ENCODE measurements at regions of chr2 and their contacts with region 1.

Region 1: GRCh38 chr2:200540793-200541192 is 14.8 kb downstream of the SGO2 start:
- DNase-seq: no peak
- H3K4me3 Mint-ChIP-seq: no peak overlapping the region
- H3K27ac Mint-ChIP-seq: no peak overlapping the region
- H3K4me1 Mint-ChIP-seq: no peaks in the 10 kb centered on the region
- H3K27me3 Mint-ChIP-seq: no peaks in the 10 kb centered on the region
- CTCF ChIP-seq: no peak

Region 2: GRCh38 chr2:200585730-200586643 is 45.2 kb after region 1 on chr2 and contains the start of gene AOX1:
- CTCF ChIA-PET with region 1: no interaction called
- intact Hi-C with region 1: loop called (anchors 1 kb)
- DNase-seq: peak; percentile 34
- H3K4me3 Mint-ChIP-seq: peak within 1 kb of the TSS; percentile 80
- H3K27ac Mint-ChIP-seq: no peak within 1 kb of the TSS
- H3K4me1 Mint-ChIP-seq: peaks cover 8% of the 10 kb centered on the region
- H3K27me3 Mint-ChIP-seq: peaks cover 20% of the 10 kb centered on the region
- CTCF ChIP-seq: no peak
- total RNA-seq, gene AOX1: 0.22 and 0.45 TPM in 2 replicates

Region 3: DNA sequence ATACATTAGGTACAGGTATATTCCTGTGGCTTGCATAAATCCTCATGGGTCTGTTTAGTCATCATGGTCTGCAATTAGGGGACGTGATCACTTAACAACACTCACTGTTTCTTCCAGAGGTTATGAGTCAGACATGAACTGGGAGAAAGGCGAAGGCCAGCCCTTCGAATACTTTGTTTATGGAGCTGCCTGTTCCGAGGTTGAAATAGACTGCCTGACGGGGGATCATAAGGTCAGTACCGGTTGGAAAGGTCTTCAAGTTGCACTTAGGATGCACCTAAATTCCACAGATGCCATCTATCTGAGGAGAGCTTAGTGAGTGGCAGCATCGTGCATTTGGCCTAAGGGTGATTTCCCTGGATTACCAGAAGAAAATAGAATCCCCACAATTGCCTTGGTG is 121.9 kb after region 1 on chr2:
- CTCF ChIA-PET with region 1: no interaction called
- intact Hi-C with region 1: no loop called
- DNase-seq: peak; percentile 12
- H3K4me3 Mint-ChIP-seq: no peak overlapping the region
- H3K27ac Mint-ChIP-seq: no peak overlapping the region
- H3K4me1 Mint-ChIP-seq: peaks cover 23% of the 10 kb centered on the region
- H3K27me3 Mint-ChIP-seq: peaks cover 11% of the 10 kb centered on the region
- CTCF ChIP-seq: no peak